Colonic mucosa (tissue), 4 donors: ENCODE measurements at regions of chr14 and their contacts with region 1.

Region 1: DNA sequence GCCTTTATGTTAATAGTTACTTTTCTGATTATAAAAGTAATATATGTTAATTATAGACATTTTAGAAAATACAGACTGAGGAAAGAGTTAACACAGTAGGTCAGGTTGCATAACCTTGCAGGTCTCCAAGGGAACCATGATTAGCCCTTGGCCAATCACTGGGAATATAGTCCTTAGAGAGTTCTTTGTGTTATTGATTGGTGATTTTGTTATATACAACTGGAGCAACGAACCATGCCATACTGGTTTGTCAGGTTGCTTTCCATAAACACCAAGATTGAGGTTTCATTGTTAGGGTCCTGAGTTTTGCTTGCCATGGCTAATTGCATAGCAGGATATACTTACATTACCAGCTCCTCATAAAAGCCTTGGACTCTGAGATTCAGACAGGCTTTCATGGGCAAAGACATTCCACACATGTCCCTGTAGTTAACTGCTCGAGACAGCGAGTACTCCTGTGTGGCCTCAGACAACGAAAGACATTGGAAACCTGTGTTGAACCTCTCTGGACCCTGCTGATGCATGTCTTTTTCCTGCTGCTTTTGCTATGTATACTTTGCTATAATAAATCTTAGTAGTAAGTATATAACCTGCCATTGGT is 33.7 kb downstream of the MAPK1IP1L start:
- DNase-seq: peak; percentile 4
- H3K4me3 ChIP-seq: no peak overlapping the region
- H3K27ac ChIP-seq: no peak overlapping the region
- H3K4me1 ChIP-seq: no peaks in the 10 kb centered on the region
- H3K27me3 ChIP-seq: no peaks in the 10 kb centered on the region
- CTCF ChIP-seq: no peak

Region 2: DNA sequence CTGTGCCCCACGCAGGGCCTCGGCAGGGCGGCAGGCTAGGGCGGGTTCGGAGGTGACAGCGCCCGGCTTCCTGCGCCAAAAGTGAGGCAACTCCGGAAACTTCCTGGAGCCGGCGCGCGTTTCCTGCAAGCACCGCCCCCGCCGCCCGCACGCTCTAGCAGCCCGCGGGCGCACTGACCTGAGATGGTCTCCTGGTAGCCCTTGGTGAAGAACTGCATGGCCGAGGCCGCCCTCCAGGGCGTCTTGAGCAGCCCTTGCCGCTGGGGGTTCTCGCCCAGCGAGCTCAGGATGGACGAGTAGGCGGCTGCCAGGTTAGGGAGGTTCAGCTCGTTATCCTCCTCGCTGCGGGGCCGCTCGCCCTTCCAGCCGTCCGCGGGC is 183.0 kb before region 1 on chr14:
- intact Hi-C with region 1: no loop called
- DNase-seq: peak; percentile 79
- H3K4me3 ChIP-seq: peak overlapping the region; percentile 96
- H3K27ac ChIP-seq: peak overlapping the region; percentile 98
- H3K4me1 ChIP-seq: no peaks in the 10 kb centered on the region
- H3K27me3 ChIP-seq: no peaks in the 10 kb centered on the region
- CTCF ChIP-seq: no peak

Region 3: DNA sequence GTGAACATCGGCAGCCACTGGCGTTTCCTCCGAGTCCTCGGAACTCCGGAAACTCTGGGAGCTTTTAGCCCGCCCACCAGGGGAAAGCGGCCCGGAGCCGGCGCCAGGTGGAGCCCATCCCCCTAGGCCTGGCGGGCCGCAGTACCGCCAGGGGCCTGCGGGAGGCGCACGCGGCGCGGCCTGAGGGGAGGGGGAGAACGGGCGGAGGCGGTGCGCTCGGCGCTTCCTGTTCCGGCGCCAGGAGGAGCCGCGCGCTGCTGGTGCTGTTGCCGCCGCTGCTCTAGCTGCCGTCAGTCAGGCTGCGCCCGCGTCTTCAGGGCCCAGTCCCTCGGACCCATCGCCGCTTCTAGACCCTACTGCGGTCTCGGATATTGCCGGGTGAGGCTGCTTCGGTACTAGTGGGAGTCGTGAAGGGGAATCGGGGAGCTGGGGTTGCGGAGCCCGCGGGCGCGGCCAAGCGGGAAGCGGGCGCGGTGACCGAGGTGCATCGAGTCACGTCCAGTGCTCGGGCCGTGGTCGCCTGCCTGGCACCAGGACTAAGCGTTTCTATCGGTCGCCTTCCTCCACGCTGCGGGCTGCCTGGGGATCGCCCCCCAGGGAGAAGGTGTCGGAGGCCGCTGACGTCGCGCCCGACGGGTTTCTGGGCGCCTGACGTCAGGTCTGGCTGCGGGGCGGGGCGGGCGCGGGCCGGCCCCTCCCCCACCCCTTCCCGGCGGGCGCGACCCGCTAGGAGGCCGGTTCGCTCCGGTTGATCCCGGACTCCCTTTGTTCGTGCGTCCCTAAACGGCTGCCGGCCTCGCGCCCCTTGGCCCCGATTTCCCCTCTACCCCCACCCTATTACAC is 33.5 kb before region 1 on chr14 and contains the start of gene MAPK1IP1L:
- intact Hi-C with region 1: loop called (anchors 5 kb)
- DNase-seq: peak; percentile 92
- H3K4me3 ChIP-seq: peak within 1 kb of the TSS; percentile 87
- H3K27ac ChIP-seq: peak within 1 kb of the TSS; percentile 98
- H3K4me1 ChIP-seq: peaks cover 15% of the 10 kb centered on the region
- H3K27me3 ChIP-seq: no peaks in the 10 kb centered on the region
- CTCF ChIP-seq: peak; percentile 100
- total RNA-seq, gene MAPK1IP1L: 79.8 to 83.2 TPM

Region 4: DNA sequence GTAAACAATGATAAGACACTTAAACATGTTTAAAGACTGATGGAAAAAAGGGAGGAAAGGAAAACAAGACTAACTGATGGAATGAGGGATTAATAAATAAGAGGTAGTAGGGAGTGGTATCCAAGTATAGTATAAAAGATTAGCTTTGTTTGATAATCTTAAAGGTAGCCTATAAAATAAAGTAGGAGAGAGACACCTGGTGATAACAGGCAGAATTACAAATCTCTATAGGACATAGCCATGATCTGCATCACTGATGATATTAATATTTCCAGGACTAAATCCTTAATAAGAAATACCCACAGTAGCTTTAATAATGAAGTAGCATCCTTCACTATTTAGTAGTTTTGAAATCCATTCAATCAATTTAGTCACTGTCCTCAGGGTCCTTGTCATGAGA is 75.8 kb after region 1 on chr14:
- intact Hi-C with region 1: loop called (anchors 2 kb)
- DNase-seq: no peak
- H3K4me3 ChIP-seq: no peak overlapping the region
- H3K27ac ChIP-seq: no peak overlapping the region
- H3K4me1 ChIP-seq: no peaks in the 10 kb centered on the region
- H3K27me3 ChIP-seq: no peaks in the 10 kb centered on the region
- CTCF ChIP-seq: peak; percentile 53